Activated CD8-positive, alpha-beta T cell treated with anti-CD3 and anti-CD28 coated beads for 36 hours (primary cell): ENCODE measurements at regions of chr12 and their contacts with region 1.

Region 1: GRCh38 chr12:48618541-48618940 is 48.7 kb upstream of the LALBA start:
- DNase-seq: peak; percentile 87
- ATAC-seq: peak; percentile 98
- H3K4me3 Mint-ChIP-seq: no peak overlapping the region
- H3K27ac Mint-ChIP-seq: no peak overlapping the region
- H3K4me1 Mint-ChIP-seq: no peaks in the 10 kb centered on the region
- H3K27me3 Mint-ChIP-seq: peaks cover 13% of the 10 kb centered on the region
- CTCF ChIP-seq: peak; percentile 97

Region 2: DNA sequence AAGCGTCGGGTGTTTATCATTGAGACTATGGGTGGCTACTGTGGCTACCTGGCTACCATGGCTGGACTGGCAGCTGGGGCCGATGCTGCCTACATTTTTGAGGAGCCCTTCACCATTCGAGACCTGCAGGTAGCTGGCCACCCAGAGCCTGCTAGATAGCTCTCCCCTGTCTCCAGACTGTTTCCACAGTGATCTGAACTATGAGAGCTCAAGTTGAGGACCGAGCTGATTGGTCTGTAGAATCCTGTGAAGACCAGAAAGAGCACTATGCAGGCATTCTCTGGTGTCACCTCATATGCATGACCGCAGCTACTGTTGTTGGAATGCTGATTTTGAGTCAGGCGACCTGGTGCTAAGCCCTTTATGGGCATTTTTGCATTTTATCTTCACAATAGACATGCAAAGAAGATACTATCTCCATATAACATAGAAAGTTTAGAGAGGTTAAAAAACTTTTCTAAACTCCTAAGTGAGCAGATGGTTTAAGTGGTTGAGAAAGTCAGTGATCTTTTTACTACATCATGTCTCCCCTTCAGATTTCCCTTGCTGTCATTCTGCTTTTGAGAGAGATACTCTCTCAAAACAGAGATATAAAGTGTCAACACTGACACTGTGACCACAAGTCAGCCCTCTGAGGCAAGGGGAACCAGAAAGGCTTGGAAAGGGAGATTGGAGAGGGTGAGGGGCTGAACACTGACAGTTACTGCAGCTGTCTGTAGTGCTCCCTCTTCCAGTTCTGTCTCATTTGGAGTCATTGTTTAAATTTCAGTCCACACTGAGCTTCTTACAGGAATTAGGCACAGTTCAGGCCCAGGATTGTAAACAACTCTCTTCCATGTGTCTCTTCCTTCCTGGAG is 475.5 kb before region 1 on chr12:
- CTCF ChIA-PET with region 1: no interaction called
- POLR2A ChIA-PET with region 1: no interaction called
- intact Hi-C with region 1: no loop called
- DNase-seq: no peak
- ATAC-seq: no peak
- H3K4me3 Mint-ChIP-seq: no peak overlapping the region
- H3K27ac Mint-ChIP-seq: no peak overlapping the region
- H3K4me1 Mint-ChIP-seq: no peaks in the 10 kb centered on the region
- H3K27me3 Mint-ChIP-seq: no peaks in the 10 kb centered on the region
- CTCF ChIP-seq: no peak

Region 3: DNA sequence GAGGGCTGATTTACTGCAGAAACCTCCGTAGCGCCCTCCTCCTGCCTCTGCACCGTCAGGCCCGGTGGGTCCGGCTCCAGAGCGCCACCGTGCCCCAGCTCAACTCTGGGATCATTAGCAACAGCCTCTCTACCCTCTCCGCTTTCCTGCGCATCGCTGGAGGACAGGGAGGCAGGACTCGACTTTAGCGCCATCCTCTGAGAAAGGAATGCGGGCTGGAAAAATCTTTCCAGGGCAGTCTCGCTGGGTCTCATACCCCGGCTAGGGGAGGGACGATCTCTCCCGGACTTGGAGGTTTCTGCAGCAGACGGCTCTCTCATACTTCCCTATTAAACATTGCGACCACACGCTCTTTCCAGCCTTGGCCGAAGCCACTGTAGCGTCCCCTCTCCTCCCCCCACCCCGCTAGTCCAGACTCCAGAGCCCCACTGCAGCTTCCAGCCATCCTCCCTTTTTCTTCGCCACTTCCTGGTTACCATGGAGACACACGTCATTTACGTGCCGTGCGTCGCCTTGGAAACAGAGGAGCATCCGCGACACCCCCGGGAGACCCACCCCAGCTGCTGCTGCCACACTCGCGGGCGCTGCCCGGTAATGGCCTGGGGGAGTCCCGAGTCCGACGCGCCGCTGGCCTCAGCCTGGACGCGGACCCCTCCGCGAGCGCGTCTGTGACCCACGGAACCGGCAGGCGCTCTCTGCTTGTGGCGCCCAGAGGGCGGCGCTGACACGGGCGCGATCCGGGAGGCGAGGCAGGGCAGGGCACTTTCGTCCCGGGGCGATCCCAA is 435.3 kb before region 1 on chr12 and contains the start of gene CCDC184:
- CTCF ChIA-PET with region 1: interaction called, 7 read pairs
- POLR2A ChIA-PET with region 1: no interaction called
- intact Hi-C with region 1: loop called (anchors 10 kb)
- DNase-seq: peak; percentile 77
- ATAC-seq: peak; percentile 70
- H3K4me3 Mint-ChIP-seq: peak within 1 kb of the TSS; percentile 83
- H3K27ac Mint-ChIP-seq: no peak within 1 kb of the TSS
- H3K4me1 Mint-ChIP-seq: peaks cover 16% of the 10 kb centered on the region
- H3K27me3 Mint-ChIP-seq: peaks cover 28% of the 10 kb centered on the region
- CTCF ChIP-seq: peak; percentile 44
- total RNA-seq, gene CCDC184: 0.25 to 0.34 TPM

Region 4: DNA sequence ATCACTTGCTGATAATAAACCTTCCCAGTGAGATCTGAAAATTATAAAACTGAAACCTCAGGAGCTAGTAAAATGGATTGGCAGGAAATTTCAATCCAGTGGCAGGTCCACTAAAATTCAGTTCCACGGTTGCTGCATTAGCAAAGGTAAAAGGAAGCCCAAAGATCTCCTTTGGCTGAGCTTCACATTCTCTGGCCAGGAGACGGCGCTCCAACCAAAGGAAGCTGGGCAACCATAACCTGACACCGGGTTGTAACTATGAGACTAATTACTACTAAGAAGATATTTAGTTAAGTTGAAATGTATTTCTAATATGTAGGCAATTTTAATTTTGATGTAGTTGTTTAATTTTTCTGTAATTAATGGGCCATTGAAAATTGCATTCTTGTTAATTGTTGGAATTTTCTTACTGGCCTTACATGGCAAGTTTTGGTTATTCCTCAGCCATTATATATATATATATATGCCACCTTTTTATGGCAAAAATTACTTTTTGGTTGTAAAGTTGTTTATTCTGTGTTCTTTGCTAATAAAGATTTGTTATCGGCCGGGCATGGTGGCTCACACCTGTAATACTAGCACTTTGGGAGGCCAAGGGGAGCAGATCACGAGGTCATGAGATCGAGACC is 76.1 kb before region 1 on chr12:
- CTCF ChIA-PET with region 1: interaction called, 217 read pairs
- POLR2A ChIA-PET with region 1: no interaction called
- intact Hi-C with region 1: loop called (anchors 2 kb)
- DNase-seq: peak; percentile 75
- ATAC-seq: peak; percentile 34
- H3K4me3 Mint-ChIP-seq: no peak overlapping the region
- H3K27ac Mint-ChIP-seq: no peak overlapping the region
- H3K4me1 Mint-ChIP-seq: peaks cover 23% of the 10 kb centered on the region
- H3K27me3 Mint-ChIP-seq: peaks cover 4% of the 10 kb centered on the region
- CTCF ChIP-seq: peak; percentile 79

Region 5: GRCh38 chr12:48572326-48572725 is 46.2 kb before region 1 on chr12:
- CTCF ChIA-PET with region 1: interaction called, 12 read pairs
- POLR2A ChIA-PET with region 1: no interaction called
- intact Hi-C with region 1: no loop called
- DNase-seq: no peak
- ATAC-seq: no peak
- H3K4me3 Mint-ChIP-seq: no peak overlapping the region
- H3K27ac Mint-ChIP-seq: no peak overlapping the region
- H3K4me1 Mint-ChIP-seq: no peaks in the 10 kb centered on the region
- H3K27me3 Mint-ChIP-seq: peaks cover 9% of the 10 kb centered on the region
- CTCF ChIP-seq: no peak

Region 6: GRCh38 chr12:48631057-48631456 is 12.5 kb after region 1 on chr12:
- CTCF ChIA-PET with region 1: interaction called, 16 read pairs
- POLR2A ChIA-PET with region 1: interaction called, 5 read pairs
- intact Hi-C with region 1: no loop called
- DNase-seq: no peak
- ATAC-seq: no peak
- H3K4me3 Mint-ChIP-seq: no peak overlapping the region
- H3K27ac Mint-ChIP-seq: no peak overlapping the region
- H3K4me1 Mint-ChIP-seq: no peaks in the 10 kb centered on the region
- H3K27me3 Mint-ChIP-seq: peaks cover 10% of the 10 kb centered on the region
- CTCF ChIP-seq: no peak